CD8-positive, alpha-beta T cell (primary cell): ENCODE measurements at regions of chr15 and their contacts with region 1.

Region 1: DNA sequence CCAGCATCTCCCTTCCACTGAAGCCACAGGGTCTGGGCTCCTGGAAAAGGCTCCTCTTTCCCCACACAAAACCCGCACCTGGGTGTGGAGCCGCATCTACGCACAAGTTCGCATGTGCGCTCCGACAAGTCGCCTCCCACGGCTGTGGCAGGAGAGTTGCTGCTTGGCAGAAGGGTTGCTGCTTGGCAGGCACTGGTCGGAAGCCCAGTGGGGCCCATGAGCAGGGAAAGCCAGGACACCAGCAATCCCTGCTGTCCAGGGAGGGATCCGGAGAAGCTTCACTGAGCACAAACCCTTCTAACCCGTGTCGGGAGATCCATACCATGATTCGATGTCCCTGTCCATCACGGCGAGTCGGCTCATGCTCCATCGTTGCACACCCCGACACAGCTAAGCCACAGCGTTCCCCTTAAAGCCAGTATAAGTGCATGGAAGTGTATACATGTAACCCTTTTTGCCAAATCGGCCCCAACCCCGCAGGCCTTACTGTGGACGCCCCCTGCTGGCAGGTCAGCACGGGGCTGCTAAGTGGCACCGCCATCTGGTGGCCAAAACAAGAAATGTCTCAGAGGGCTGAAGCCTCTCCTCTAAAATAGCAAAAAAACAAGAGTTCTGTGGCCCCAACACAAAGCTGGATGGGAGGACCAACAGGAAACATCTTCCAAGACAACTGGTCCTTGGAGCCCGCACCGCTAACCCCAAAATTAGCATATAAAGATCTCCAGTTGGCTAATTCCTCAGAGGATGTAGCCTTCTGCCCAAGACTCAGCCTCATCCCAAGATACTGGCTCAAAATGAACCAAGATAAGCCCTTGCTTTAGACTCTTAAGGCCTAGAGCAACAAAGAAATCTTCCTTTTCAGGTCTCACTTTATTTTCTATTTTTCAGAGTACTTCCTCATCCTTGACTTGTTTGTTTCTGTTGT is 8.3 kb downstream of the ANKRD63 start:
- DNase-seq: peak; percentile 79 to 94 (median 88)
- ATAC-seq: peak; percentile 91
- H3K4me3 ChIP-seq: no peak overlapping the region
- H3K4me3 Mint-ChIP-seq: no peak overlapping the region
- H3K27ac ChIP-seq: no peak overlapping the region
- H3K27ac Mint-ChIP-seq: no peak overlapping the region
- H3K4me1 ChIP-seq: no peaks in the 10 kb centered on the region
- H3K4me1 Mint-ChIP-seq: peaks cover 5% of the 10 kb centered on the region
- H3K27me3 ChIP-seq: no peaks in the 10 kb centered on the region
- H3K27me3 Mint-ChIP-seq: peaks cover 12% of the 10 kb centered on the region
- CTCF ChIP-seq: peak; percentile 100

Region 2: GRCh38 chr15:38886315-38887171 is 1388.1 kb before region 1 on chr15:
- CTCF ChIA-PET with region 1: no interaction called
- POLR2A ChIA-PET with region 1: no interaction called
- intact Hi-C with region 1: no loop called
- DNase-seq: no peak
- ATAC-seq: no peak
- H3K4me3 ChIP-seq: no peak overlapping the region
- H3K4me3 Mint-ChIP-seq: no peak overlapping the region
- H3K27ac ChIP-seq: no peak overlapping the region
- H3K27ac Mint-ChIP-seq: no peak overlapping the region
- H3K4me1 ChIP-seq: no peaks in the 10 kb centered on the region
- H3K4me1 Mint-ChIP-seq: peaks cover 7% of the 10 kb centered on the region
- H3K27me3 ChIP-seq: peaks cover 0 to 2% of the 10 kb centered on the region in 2 experiments
- H3K27me3 Mint-ChIP-seq: peaks cover 11% of the 10 kb centered on the region
- CTCF ChIP-seq: no peak

Region 3: DNA sequence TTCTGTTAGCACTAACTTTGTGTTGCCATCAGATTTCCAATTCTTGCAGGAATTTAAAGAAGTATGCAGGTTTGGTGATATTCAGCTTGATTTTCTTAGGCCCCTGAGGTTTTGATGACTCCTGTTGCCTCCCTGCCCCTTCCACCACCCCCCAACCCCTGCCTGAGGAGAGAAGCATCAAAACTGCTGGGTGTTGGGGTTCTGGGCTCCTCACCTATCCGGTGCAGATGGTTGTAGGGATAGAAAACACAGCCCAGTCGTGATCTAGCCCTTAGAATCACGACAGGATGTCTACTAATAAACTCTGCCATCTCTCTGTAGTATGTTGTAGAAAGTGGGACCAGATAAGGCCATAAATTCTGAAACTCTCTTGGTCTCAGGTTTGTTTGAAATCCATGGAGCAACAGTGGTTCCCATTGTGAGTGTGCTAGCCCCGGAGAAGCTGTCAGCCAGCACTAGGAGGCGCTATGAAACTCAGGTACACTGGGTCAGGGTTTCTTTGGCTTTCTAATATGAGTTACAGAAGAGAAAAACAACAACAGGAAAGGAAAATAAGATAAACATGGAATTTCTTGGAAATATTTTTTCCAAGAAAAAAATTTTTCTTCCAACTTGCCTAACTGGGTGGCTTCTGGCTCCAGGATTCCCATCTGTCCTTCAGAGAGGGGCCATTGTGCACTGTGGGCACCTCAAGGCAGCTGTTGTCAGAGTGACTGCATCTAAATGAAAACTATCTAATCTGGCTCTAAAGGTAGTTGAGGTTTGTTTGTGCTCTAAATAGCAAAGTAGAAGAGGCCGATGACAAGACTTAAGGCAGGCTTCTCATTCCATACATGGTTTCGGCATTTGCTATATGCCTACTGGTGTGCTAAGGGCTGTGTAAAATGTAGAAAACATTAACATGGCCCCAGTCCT is 244.4 kb before region 1 on chr15:
- CTCF ChIA-PET with region 1: interaction called, 13 read pairs
- POLR2A ChIA-PET with region 1: no interaction called
- intact Hi-C with region 1: no loop called
- DNase-seq: peak in 1 of 9 experiments; percentile 32
- ATAC-seq: no peak
- H3K4me3 ChIP-seq: no peak overlapping the region
- H3K4me3 Mint-ChIP-seq: no peak overlapping the region
- H3K27ac ChIP-seq: no peak overlapping the region
- H3K27ac Mint-ChIP-seq: no peak overlapping the region
- H3K4me1 ChIP-seq: no peaks in the 10 kb centered on the region
- H3K4me1 Mint-ChIP-seq: peaks cover 9% of the 10 kb centered on the region
- H3K27me3 ChIP-seq: no peaks in the 10 kb centered on the region
- H3K27me3 Mint-ChIP-seq: no peaks in the 10 kb centered on the region
- CTCF ChIP-seq: peak; percentile 50

Region 4: DNA sequence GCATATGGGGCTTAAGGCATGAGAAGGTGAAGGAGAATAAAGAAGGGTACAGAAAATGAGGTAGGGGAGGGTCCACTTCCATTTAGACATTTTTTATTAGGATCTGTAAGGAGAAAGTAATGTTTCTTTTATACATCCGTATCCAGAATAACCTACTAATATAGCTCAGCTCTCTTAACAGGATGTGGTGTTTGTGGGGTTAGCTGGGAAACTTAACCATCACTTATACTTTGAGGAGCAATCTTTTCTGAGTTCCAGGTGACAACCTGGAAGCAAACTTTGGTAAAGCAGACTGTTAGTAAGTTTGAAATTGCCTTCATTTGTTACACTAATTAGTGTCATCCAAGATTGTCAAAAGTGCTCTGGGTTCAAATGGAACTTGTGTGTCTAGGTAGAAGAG is 77.2 kb before region 1 on chr15:
- CTCF ChIA-PET with region 1: interaction called, 15 read pairs
- POLR2A ChIA-PET with region 1: no interaction called
- intact Hi-C with region 1: no loop called
- DNase-seq: peak in 2 of 9 experiments; percentile 14 to 52
- ATAC-seq: no peak
- H3K4me3 ChIP-seq: no peak overlapping the region
- H3K4me3 Mint-ChIP-seq: peak overlapping the region; percentile 49
- H3K27ac ChIP-seq: no peak overlapping the region
- H3K27ac Mint-ChIP-seq: no peak overlapping the region
- H3K4me1 ChIP-seq: peaks cover 15% of the 10 kb centered on the region
- H3K4me1 Mint-ChIP-seq: peaks cover 26% of the 10 kb centered on the region
- H3K27me3 ChIP-seq: no peaks in the 10 kb centered on the region
- H3K27me3 Mint-ChIP-seq: no peaks in the 10 kb centered on the region
- CTCF ChIP-seq: no peak

Region 5: DNA sequence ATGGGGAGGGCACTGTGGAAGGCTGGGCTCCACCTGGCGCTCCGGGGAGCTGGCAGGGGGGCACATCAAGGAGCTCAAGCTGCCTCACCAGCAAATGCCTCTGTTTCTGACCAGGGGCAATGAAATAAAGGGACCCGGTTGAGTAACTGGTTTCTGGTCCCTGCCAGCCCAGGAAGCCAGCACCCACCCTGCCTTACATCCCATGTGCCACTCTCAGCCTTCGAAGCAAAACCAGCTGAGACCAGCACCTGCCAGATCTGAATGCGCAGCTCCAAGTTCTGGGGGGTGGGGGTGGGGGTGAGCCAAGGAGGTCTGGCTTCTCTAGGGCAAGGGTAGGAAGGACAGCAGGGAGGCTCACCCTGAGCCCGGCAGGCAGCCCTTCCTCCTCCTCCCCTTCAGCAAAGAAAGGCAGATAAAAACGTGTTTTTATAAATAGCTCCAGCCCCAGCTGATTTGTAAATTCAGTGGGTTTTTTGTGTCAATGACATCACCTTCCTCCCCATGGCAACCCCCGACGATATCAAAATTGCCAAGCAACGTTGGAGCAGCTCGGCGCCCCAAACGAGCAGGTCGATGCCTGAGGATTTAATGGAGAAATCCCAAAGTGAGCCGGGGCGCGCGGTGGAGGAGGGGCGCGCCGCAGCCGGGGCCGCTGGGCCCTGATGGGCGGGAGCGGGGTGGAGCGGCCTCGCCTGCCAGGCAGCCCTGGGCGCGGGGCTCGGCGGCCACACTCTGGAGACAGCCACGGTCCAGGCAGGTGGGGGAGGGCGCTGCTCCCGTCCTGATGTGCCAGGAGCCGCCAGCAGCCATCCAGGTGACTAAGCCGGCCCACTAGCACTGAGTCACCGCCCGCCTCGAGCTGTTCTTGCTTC is 35.8 kb before region 1 on chr15 and contains the start of gene PAK6:
- CTCF ChIA-PET with region 1: interaction called, 11 read pairs
- POLR2A ChIA-PET with region 1: no interaction called
- intact Hi-C with region 1: no loop called
- DNase-seq: peak in 4 of 9 experiments; percentile 34 to 46 (median 38)
- ATAC-seq: peak; percentile 58
- H3K4me3 ChIP-seq: no peak within 1 kb of the TSS
- H3K4me3 Mint-ChIP-seq: peak within 1 kb of the TSS; percentile 32
- H3K27ac ChIP-seq: no peak within 1 kb of the TSS
- H3K27ac Mint-ChIP-seq: no peak within 1 kb of the TSS
- H3K4me1 ChIP-seq: no peaks in the 10 kb centered on the region
- H3K4me1 Mint-ChIP-seq: peaks cover 10% of the 10 kb centered on the region
- H3K27me3 ChIP-seq: peaks cover 4 to 8% of the 10 kb centered on the region in 2 experiments
- H3K27me3 Mint-ChIP-seq: peaks cover 21% of the 10 kb centered on the region
- CTCF ChIP-seq: no peak
- total RNA-seq, gene PAK6: 0.64 to 1.1 TPM

Region 6: DNA sequence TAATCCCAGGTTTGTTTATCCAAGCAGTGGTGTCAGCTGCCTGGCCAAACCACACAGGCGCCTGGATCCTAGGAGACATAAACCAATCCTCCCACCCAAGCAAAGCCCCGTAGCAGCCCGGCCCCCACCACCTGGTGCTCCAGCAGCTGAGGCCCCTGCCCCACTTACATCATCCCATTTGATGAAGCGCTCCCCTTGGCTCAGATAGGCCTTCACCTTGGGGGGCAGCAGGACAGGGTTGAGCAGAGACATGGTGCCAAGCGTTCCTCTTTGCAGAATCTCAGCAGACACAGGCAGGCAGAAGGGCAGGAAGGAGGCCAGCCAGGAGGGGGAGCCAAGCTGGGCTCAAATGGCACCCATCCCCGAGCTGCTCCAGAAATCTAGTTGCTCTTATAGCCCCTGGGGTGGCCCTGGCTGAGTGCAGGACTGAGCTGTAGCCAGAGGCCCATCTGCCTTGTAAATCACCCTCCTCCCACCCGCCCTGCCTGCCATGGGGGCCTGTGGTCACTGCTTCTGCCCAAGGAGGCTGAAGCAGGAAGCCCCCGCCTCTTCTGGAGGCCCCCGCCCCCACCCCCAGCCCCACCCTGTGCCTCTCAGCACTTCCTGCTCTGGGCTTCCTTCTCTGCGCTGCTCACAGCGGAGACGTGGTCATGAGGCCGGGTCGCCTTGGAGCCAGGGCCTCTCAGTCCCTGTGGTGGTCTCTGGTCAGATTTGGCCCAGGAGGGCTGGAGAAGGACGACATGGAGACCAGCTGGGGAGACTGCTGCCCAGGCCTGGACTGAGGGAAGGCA is 33.0 kb after region 1 on chr15 and contains the start of gene PLCB2:
- CTCF ChIA-PET with region 1: interaction called, 541 read pairs
- POLR2A ChIA-PET with region 1: interaction called, 24 read pairs
- intact Hi-C with region 1: loop called (anchors 1 kb)
- DNase-seq: peak; percentile 45 to 86 (median 72)
- ATAC-seq: peak; percentile 76
- H3K4me3 ChIP-seq: peak within 1 kb of the TSS; percentile 92 to 97
- H3K4me3 Mint-ChIP-seq: peak within 1 kb of the TSS; percentile 95
- H3K27ac ChIP-seq: peak within 1 kb of the TSS; percentile 76 to 87
- H3K27ac Mint-ChIP-seq: peak within 1 kb of the TSS; percentile 96
- H3K4me1 ChIP-seq: peaks cover 31% of the 10 kb centered on the region
- H3K4me1 Mint-ChIP-seq: peaks cover 46% of the 10 kb centered on the region
- H3K27me3 ChIP-seq: no peaks in the 10 kb centered on the region
- H3K27me3 Mint-ChIP-seq: no peaks in the 10 kb centered on the region
- CTCF ChIP-seq: peak; percentile 57
- total RNA-seq, gene PLCB2: 154 to 167 TPM

Region 7: GRCh38 chr15:40421246-40422157 is 146.9 kb after region 1 on chr15:
- CTCF ChIA-PET with region 1: interaction called, 7 read pairs
- POLR2A ChIA-PET with region 1: no interaction called
- intact Hi-C with region 1: loop called (anchors 1 kb)
- DNase-seq: peak; percentile 65 to 89 (median 80)
- ATAC-seq: peak; percentile 99
- H3K4me3 ChIP-seq: no peak overlapping the region
- H3K4me3 Mint-ChIP-seq: no peak overlapping the region
- H3K27ac ChIP-seq: no peak overlapping the region
- H3K27ac Mint-ChIP-seq: no peak overlapping the region
- H3K4me1 ChIP-seq: peaks cover 6% of the 10 kb centered on the region
- H3K4me1 Mint-ChIP-seq: no peaks in the 10 kb centered on the region
- H3K27me3 ChIP-seq: no peaks in the 10 kb centered on the region
- H3K27me3 Mint-ChIP-seq: no peaks in the 10 kb centered on the region
- CTCF ChIP-seq: peak; percentile 80